OCI-LY7 (cell line): ENCODE measurements at regions of chr6 and their contacts with region 1.

Region 1: GRCh38 chr6:169789982-169790927 is 38.8 kb downstream of the ERMARD start:
- DNase-seq: peak; percentile 70
- H3K4me3 ChIP-seq: peak overlapping the region; percentile 63
- H3K27ac ChIP-seq: no peak overlapping the region
- H3K4me1 ChIP-seq: peaks cover 3% of the 10 kb centered on the region
- CTCF ChIP-seq: peak; percentile 97

Region 2: DNA sequence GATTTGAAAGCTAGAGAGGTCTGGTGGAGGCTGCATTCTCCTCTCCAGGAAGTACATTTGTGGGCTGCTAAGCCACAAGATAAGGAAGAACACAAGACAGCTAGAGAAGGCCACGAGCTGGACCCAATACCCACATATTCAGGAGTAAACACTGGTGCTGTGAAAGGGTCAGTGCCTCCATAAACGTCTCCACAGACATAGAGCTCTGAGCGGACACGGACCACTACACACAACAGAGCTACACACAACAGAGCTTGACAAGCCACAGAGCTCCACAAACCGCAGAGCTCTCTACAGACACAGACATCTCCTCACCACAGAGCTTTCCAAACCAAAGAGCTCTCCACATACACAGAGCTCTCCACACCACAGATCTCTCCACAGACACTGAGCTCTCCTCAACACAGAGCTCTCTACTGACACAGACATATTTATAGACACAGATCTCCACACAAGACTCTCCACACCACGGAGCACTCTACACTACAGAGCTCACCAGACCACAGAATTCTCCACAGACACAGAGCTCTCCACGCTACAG is 13.1 kb after region 1 on chr6:
- CTCF ChIA-PET with region 1: interaction called, 26 read pairs
- POLR2A ChIA-PET with region 1: interaction called, 11 read pairs
- intact Hi-C with region 1: no loop called
- DNase-seq: peak; percentile 64
- H3K4me3 ChIP-seq: no peak overlapping the region
- H3K27ac ChIP-seq: no peak overlapping the region
- H3K4me1 ChIP-seq: peaks cover 13% of the 10 kb centered on the region
- CTCF ChIP-seq: no peak

Region 3: GRCh38 chr6:169831450-169832246 is 41.4 kb after region 1 on chr6:
- CTCF ChIA-PET with region 1: no interaction called
- POLR2A ChIA-PET with region 1: no interaction called
- intact Hi-C with region 1: loop called (anchors 1 kb)
- DNase-seq: peak; percentile 66
- H3K4me3 ChIP-seq: no peak overlapping the region
- H3K27ac ChIP-seq: no peak overlapping the region
- H3K4me1 ChIP-seq: peaks cover 3% of the 10 kb centered on the region
- CTCF ChIP-seq: peak; percentile 93

Region 4: GRCh38 chr6:170037541-170038250 is 247.4 kb after region 1 on chr6:
- CTCF ChIA-PET with region 1: no interaction called
- POLR2A ChIA-PET with region 1: no interaction called
- intact Hi-C with region 1: no loop called
- DNase-seq: no peak
- H3K4me3 ChIP-seq: no peak overlapping the region
- H3K27ac ChIP-seq: no peak overlapping the region
- H3K4me1 ChIP-seq: no peaks in the 10 kb centered on the region
- CTCF ChIP-seq: no peak

Region 5: DNA sequence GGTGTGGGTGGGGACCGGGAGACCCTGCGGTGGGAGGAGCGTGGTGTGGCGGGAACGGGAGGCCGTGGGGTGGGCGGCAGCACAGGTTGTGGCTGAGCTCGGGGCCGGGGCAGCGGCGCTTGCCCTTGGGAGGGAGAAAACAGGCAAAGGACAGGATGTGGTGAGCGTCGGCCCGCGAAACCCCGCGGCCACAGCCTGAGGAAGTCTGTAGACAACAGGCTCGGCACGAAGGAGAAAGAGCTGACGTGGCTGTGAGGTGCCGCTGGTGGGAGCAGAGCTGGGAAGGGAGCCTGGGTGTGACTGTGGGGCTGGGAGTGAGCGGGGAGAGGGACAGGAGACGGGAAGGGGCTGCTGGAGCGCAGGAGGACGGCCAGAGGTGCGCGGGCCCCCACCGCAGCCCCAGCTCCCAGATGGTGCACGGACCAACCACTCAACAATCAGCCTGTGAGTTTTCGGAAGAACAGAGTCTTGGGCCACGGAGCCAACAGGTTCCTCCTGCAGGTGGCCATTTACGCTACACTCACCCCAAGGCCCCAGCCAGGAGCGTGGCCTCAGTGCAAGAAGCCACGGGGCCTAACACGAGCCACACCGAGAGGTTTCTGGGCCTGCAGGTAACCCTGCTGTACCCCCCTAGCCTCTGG is 297.8 kb after region 1 on chr6:
- CTCF ChIA-PET with region 1: interaction called, 3 read pairs
- POLR2A ChIA-PET with region 1: no interaction called
- intact Hi-C with region 1: loop called (anchors 2 kb)
- DNase-seq: peak; percentile 74
- H3K4me3 ChIP-seq: peak overlapping the region; percentile 49
- H3K27ac ChIP-seq: peak overlapping the region; percentile 69
- H3K4me1 ChIP-seq: peaks cover 31% of the 10 kb centered on the region
- CTCF ChIP-seq: no peak

Region 6: DNA sequence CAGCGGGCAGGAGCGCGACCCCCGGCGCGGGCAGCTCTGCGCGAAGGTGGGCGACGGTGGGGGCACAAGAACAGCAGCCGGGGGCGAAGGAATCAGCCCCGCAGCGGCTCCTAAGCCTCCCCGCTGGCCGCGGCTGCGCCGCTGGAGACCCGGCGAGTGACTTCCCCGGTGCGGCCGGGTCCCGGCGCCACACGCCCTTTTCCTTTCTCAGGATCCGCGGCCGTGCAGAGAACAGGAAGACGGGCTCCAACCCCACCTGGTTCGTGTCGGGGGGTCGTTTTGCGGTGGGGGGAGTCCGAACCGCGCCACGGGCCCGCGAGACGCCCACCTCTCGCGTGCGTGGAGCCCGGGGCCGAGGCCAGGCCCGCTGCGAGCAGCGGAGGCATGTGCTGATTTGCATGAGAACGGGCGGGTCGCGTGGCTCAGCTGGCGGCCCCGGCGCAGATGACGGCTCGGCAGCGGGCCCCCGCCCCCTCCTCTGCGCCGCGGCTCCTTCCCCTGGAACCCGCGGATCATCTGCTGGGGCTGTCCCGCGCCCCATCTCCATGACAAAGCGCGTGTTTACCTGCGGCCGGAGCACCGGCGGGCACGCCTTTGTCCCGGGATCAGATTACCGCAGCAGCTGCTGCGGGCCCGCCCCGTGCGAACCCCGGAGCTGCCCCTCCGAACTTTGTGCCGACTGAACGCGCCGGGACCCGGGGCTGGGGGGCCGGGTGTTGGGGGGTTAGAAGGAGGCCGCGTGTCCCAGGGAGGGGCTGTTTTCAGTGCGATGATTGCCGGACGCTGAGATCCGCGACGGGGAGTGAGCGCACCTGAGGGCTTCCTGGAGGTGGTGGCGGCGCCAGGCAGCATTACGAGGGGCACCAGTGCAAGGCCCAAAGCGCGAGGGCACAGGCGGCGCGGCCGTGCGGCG is 505.5 kb after region 1 on chr6:
- CTCF ChIA-PET with region 1: no interaction called
- POLR2A ChIA-PET with region 1: no interaction called
- intact Hi-C with region 1: loop called (anchors 10 kb)
- DNase-seq: peak; percentile 20
- H3K4me3 ChIP-seq: peak overlapping the region; percentile 24
- H3K27ac ChIP-seq: no peak overlapping the region
- H3K4me1 ChIP-seq: peaks cover 7% of the 10 kb centered on the region
- CTCF ChIP-seq: no peak

Region 7: GRCh38 chr6:170516783-170517616 is 726.7 kb after region 1 on chr6:
- CTCF ChIA-PET with region 1: interaction called, 4 read pairs
- POLR2A ChIA-PET with region 1: no interaction called
- intact Hi-C with region 1: loop called (anchors 1 kb)
- DNase-seq: peak; percentile 74
- H3K4me3 ChIP-seq: no peak overlapping the region
- H3K27ac ChIP-seq: no peak overlapping the region
- H3K4me1 ChIP-seq: no peaks in the 10 kb centered on the region
- CTCF ChIP-seq: peak; percentile 88

Region 8: GRCh38 chr6:170529839-170530469 is 739.7 kb after region 1 on chr6:
- CTCF ChIA-PET with region 1: interaction called, 9 read pairs
- POLR2A ChIA-PET with region 1: no interaction called
- intact Hi-C with region 1: loop called (anchors 1 kb)
- DNase-seq: peak; percentile 69
- H3K4me3 ChIP-seq: no peak overlapping the region
- H3K27ac ChIP-seq: no peak overlapping the region
- H3K4me1 ChIP-seq: no peaks in the 10 kb centered on the region
- CTCF ChIP-seq: peak; percentile 94